Heart left ventricle (tissue), 16 donors: ENCODE measurements at regions of chr13 and their contacts with region 1.

Region 1: GRCh38 chr13:44854313-44855060 is 134.8 kb downstream of the NUFIP1 start:
- DNase-seq: peak; percentile 56 to 87 (median 72)
- ATAC-seq: peak; percentile 97 to 99 (median 98)
- H3K4me3 ChIP-seq: no peak overlapping the region
- H3K27ac ChIP-seq: peak overlapping the region; percentile 43 to 87 (median 81)
- H3K4me1 ChIP-seq: peaks cover 0 to 26% (median 10%) of the 10 kb centered on the region in 12 donors
- H3K27me3 ChIP-seq: no peaks in the 10 kb centered on the region
- CTCF ChIP-seq: no peak
- POLR2A ChIP-seq: no peak

Region 2: DNA sequence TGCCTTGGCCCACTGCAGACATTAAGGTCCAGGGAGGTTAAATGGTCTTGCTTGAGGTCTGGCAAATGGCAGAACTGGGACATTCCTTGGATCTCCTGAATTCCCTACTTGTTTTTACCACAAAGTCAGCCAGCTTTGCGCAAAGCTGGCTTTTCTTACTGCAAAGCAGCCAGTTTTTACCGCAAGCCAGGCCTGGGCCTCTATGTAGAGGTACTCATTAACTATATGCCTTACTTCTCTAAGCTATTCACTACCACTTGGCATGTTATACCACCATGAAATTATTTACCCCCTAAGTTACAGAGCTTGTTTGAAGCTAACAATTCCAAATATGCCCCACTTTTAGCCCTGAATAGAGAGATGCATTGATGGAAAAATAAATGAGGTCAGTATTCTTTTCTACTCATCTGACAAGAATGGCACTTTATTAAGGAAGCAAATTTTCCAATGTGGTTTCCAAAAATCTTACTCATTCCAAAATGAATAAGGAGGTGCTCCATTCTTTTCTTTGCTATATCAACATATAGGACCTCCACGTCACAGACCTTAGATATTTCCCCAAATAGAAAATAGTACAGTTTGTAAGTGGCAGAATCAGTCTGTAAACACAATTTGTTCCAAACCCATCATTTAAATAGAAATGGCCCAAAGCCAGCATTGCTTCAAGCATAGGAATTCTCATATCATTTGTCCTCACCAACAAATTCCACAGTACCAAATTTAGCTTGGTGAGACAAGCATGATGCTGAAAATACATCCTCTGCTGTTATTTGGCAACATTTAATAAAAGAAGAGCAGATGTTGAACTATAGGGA is 134.4 kb before region 1 on chr13:
- intact Hi-C with region 1: loop called in 1 of 10 experiments (anchors 10 kb)
- DNase-seq: no peak
- ATAC-seq: peak; percentile 52 to 87 (median 81)
- H3K4me3 ChIP-seq: no peak overlapping the region
- H3K27ac ChIP-seq: peak overlapping the region in 11 of 12 donors; percentile 12 to 80 (median 61)
- H3K4me1 ChIP-seq: peaks cover 0 to 35% (median 2%) of the 10 kb centered on the region in 12 donors
- H3K27me3 ChIP-seq: no peaks in the 10 kb centered on the region
- CTCF ChIP-seq: no peak
- POLR2A ChIP-seq: no peak